ENCODE measurements at regions of chr10 and their contacts with region 1.

Region 1: DNA sequence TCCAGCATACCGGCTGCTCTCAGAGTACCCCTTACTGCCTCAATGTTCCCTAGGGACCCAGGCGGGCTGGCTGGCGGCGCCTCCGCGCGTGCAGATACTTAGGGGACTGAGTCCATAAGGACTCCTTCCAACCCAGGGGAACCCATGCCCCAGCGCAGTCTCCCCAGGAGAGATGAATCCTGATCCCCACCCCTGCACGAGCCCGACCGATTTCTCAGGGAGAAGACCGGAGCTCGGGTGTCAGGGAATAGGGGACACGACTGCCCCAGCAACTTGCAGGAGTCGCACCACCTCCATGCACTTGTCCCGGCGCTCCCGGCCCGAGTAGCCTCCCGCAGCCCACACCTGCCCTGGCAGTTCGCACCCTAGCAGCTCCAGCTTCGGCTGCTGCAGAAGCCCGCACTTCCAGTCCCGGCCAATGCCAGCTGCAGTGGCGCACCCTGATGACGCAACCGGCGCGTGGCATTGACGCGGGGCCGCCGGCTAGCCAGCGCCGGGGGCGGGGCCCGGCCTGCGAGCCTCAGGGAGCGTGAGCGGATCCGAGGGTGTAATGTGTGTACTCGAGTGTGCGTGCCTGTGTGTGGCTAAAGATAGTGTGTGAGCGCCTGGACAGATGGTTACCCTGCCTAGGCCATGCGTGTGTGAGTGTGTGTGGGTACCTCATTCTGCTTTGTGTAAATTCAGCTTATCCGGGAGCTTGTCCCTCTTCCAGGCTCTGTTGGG is at the start of gene GPAM:
- DNase-seq: peak; percentile 99
- H3K4me3 ChIP-seq: peak within 1 kb of the TSS; percentile 63 to 96 (median 90)
- H3K27ac ChIP-seq: peak within 1 kb of the TSS; percentile 47 to 87 (median 75)
- H3K4me1 ChIP-seq: peaks cover 2 to 35% (median 21%) of the 10 kb centered on the region in 6 donors
- H3K27me3 ChIP-seq: no peaks in the 10 kb centered on the region
- CTCF ChIP-seq: peak in 6 of 11 experiments; percentile 15 to 46 (median 32)
- POLR2A ChIP-seq: peak in 2 of 3 donors; percentile 55 to 57
- total RNA-seq, gene GPAM: 5.0 to 15.0 (median 7.1) TPM

Region 2: GRCh38 chr10:112278871-112279270 is 95.4 kb after region 1 on chr10:
- intact Hi-C with region 1: no loop called
- DNase-seq: no peak
- H3K4me3 ChIP-seq: no peak overlapping the region
- H3K27ac ChIP-seq: no peak overlapping the region
- H3K4me1 ChIP-seq: peaks cover 0 to 6% (median 0%) of the 10 kb centered on the region in 6 donors
- H3K27me3 ChIP-seq: peaks cover 0 to 22% (median 0%) of the 10 kb centered on the region in 7 donors
- CTCF ChIP-seq: no peak
- POLR2A ChIP-seq: no peak

Region 3: GRCh38 chr10:112314822-112315474 is 131.5 kb after region 1 on chr10:
- intact Hi-C with region 1: loop called (anchors 10 kb)
- DNase-seq: peak; percentile 88
- H3K4me3 ChIP-seq: no peak overlapping the region
- H3K27ac ChIP-seq: no peak overlapping the region
- H3K4me1 ChIP-seq: peaks cover 0 to 13% (median 3%) of the 10 kb centered on the region in 6 donors
- H3K27me3 ChIP-seq: peaks cover 0 to 17% (median 0%) of the 10 kb centered on the region in 7 donors
- CTCF ChIP-seq: peak; percentile 39 to 91 (median 84)
- POLR2A ChIP-seq: no peak

Region 4: DNA sequence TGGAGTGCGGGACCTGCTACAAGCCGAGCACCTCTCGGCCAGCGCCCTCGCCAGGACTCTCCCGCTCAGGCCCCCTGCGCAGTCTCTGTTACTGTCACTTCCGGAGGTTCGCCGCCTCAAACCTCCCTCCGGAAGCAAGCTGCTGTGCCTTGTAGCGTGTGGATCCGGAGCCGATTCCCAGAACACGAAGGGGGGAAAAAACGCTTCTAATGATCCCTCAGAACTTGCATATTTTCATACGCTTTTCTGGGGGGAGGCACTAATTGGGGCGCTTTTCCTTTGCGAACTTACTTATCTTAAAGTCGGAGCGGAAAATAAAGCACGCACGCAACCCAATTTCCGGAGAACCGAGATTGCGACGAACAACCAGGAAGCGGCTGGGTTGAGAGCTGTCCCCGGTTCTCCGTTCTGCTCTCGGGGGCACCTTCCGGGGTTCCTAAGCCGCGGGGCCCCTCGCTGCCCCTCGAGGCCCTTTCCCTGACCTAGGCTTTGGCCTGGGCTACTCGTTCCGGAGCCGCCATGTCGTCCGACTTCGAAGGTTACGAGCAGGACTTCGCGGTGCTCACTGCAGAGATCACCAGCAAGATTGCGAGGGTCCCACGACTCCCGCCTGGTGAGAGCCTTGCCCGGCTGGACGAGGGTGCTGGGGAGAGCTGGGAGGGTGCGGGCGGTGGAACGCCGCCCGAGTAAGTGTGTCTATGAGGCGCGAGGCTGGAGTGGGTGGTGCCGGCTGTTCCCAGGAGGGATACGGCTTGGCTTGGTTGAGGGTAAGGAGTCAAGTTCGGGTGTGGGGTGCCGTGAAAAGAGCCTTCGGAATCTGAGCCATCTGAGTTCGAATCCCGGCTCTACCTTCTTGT is 263.6 kb after region 1 on chr10 and contains the starts of genes VTI1A and ZDHHC6:
- intact Hi-C with region 1: loop called (anchors 10 kb)
- DNase-seq: peak; percentile 95
- H3K4me3 ChIP-seq: peak within 1 kb of the TSS; percentile 65 to 98 (median 91)
- H3K27ac ChIP-seq: peak within 1 kb of the TSS; percentile 85 to 94 (median 90)
- H3K4me1 ChIP-seq: peaks cover 24 to 89% (median 52%) of the 10 kb centered on the region in 6 donors
- H3K27me3 ChIP-seq: no peaks in the 10 kb centered on the region
- CTCF ChIP-seq: peak in 5 of 11 experiments; percentile 8 to 34 (median 20)
- POLR2A ChIP-seq: peak in 1 of 3 donors; percentile 73
- total RNA-seq, gene VTI1A: 46.5 to 129 (median 73.2) TPM
- total RNA-seq, gene ZDHHC6: 28.0 to 47.1 (median 38.7) TPM